ENCODE measurements at regions of chr15 and their contacts with region 1.

Region 1: DNA sequence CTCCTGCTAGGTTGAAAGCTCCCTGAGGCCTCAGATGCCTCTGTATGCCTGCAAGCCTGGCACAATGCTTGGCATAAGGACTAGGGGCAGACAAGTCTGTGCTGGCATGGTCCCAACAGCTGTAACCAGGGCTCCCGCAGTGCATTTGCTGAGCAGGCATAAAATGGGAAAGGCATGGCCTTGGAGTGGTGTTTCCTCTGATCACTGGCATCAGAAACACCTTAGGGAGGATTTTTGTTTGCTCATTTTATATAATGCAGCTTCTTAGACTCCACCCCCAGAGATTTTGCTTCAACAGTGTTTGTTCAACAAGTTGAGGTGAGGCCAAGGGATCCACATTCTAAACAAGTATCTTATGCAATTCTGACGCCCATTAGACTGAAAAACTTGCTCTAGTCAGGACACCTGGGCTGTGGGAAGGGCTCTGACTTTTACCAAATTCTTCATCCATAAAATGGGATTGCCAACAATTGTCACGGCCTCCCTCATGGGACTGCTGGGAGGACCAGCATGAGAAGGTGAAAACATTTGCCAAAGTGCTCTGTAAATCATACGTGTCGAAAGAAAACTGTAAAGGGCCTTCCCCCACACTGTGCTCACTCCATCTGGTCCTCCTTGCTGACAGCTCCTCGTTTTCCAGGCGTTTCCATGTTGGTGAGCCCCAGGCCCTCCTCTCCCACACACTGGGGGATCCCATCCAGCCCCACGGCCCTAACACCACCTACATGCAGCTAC is 43.1 kb downstream of the STARD5 start:
- DNase-seq: no peak
- H3K4me3 Mint-ChIP-seq: no peak overlapping the region
- H3K27ac Mint-ChIP-seq: peak overlapping the region; percentile 5
- H3K4me1 Mint-ChIP-seq: peaks cover 37% of the 10 kb centered on the region
- H3K27me3 Mint-ChIP-seq: no peaks in the 10 kb centered on the region

Region 2: DNA sequence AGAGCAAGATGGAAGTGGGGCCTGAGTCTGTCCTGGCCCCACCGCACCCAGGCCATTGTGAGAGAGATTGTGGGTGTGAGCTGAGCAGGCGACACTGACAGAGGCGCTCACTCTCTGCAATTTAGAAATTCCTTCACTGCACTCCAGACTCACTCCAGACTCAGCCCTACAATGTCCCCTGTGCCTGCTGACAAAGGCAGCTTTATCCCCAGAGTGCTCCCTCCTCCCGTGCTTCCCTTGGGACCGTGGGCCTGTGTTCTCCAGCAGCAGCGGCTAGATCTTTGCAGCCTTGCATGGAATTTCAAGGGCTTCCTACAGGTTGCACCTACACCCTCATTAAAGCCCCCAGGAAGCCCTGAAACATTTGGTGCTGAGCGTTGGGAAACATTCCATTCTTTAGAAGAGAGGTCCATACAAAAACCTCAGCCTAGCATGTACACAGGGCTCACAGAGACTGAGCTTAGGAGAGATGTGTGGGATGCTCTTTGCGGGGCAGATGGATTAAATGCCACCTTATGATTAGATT is 85.5 kb before region 1 on chr15:
- CTCF ChIA-PET with region 1: no interaction called
- POLR2A ChIA-PET with region 1: no interaction called
- DNase-seq: no peak
- H3K4me3 Mint-ChIP-seq: no peak overlapping the region
- H3K27ac Mint-ChIP-seq: no peak overlapping the region
- H3K4me1 Mint-ChIP-seq: peaks cover 3% of the 10 kb centered on the region
- H3K27me3 Mint-ChIP-seq: peaks cover 20% of the 10 kb centered on the region

Region 3: DNA sequence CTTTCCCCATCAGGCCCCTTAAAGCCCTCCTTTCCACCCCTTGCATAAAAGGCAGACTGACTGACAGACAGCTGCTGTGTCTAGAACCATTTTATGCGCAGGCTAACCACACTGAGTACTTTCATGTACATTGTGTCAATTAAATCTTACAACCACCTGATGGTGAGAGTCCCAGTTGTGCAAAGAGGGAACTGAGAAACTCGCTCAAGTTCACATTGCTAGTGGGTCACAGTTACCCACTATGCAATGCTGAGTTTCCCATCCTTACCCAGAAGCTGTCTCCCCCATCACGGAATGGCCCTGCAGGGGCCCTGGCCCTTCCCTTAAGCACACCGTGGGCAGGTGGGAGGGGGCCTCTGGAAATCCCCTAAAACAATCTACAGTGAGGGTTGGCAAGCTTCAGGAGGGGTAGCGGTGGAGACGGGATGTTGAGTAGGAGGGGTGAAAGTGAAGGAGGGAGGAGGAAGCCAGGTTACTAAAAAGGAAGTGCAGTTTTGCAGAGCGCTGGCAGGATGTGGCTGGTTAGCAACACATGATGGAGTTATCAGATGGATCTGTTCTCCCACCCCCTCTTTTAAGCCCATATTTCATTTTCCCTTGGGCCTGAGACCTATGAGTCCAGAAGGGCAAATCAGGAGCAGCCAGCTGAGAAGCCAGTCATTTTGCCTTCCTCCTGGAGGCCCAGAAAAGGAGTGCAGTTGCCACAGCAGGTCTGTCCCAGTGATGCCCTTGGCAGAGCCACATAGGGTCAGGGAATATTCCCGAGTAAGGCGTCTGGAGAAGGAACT is 13.0 kb after region 1 on chr15:
- CTCF ChIA-PET with region 1: interaction called, 16 read pairs
- POLR2A ChIA-PET with region 1: no interaction called
- DNase-seq: peak; percentile 85
- H3K4me3 Mint-ChIP-seq: peak overlapping the region; percentile 98
- H3K27ac Mint-ChIP-seq: peak overlapping the region; percentile 97
- H3K4me1 Mint-ChIP-seq: peaks cover 68% of the 10 kb centered on the region
- H3K27me3 Mint-ChIP-seq: no peaks in the 10 kb centered on the region